ENCODE measurements at regions of chr17 and their contacts with region 1.

Region 1: DNA sequence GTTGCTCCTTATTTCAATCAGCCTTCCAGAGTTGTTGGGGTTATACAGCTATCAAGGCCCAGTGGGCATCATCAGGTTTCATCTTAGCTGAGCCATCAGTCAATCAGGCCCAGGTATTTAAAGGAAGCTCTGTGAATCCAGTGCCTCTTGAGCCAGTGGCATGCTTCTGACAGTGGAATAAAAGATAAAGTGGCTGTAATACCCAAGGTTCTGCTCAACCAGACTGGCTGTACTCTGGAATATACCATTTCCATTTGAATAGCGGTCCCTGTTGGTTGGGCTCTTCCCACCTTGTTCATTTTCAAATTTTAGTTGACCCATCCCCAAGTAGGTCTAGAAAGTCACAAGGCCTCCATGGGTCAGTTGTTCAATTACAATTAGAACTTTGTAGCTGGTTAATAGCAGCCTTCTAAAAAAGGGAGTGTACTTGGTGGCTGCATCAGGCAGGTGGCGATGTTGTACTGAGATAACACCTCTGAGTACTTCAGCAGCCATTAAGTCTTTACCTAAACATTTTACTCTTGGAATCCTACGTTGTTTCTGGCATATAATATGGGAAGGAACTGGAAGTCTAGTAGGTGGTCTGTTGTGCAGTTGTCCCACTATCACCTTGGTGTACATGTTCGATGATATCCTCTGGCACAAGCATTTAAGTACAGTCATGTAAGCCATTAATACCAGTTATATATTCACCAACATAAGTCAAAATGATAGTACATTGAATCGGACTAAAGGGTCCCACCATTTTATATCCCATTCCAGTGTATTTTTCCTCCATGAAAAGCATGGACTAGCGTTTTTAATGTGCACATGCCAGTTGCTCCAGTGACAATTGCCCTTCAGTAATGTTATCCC is 294.1 kb downstream of the BCAS3 start:
- DNase-seq: peak; percentile 44 to 67
- H3K4me3 ChIP-seq: no peak overlapping the region
- H3K4me1 ChIP-seq: no peaks in the 10 kb centered on the region
- H3K27me3 ChIP-seq: no peaks in the 10 kb centered on the region

Region 2: GRCh38 chr17:60743799-60744198 is 227.9 kb before region 1 on chr17:
- in situ Hi-C with region 1: loop called (anchors 25 kb)
- DNase-seq: peak; percentile 11 to 49
- H3K4me3 ChIP-seq: no peak overlapping the region
- H3K4me1 ChIP-seq: peaks cover 12% of the 10 kb centered on the region
- H3K27me3 ChIP-seq: no peaks in the 10 kb centered on the region